ENCODE measurements at regions of chr15 and their contacts with region 1.

Region 1: DNA sequence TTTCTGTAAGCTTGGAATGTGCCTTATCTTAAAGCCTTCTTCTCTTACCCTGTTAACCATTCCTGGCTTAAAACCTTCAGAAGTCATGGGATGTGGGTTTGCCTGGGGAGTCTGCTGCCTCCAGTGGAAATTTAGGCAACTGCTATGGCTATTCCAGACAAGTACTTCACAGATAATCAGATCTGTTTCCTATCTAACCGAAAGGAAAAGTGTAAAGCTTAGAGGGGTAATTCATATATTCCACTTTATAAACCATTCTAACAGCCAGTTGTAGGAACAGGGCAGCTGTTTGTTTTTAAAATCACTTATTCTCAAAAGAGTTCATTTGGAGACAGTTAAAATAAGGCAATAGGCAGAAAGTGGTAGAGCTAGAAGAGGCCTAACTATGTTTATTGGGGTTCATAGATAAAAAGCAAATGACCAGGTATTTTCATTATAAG is 219.9 kb downstream of the TCF12 start:
- DNase-seq: peak; percentile 60 to 72
- H3K4me3 ChIP-seq: no peak overlapping the region
- H3K4me3 Mint-ChIP-seq: no peak overlapping the region
- H3K27ac Mint-ChIP-seq: no peak overlapping the region
- H3K4me1 ChIP-seq: no peaks in the 10 kb centered on the region
- H3K4me1 Mint-ChIP-seq: peaks cover 2% of the 10 kb centered on the region
- H3K27me3 ChIP-seq: no peaks in the 10 kb centered on the region
- H3K27me3 Mint-ChIP-seq: no peaks in the 10 kb centered on the region
- CTCF ChIP-seq: peak; percentile 84 to 87

Region 2: GRCh38 chr15:56918046-56918938 is 220.1 kb before region 1 on chr15 and contains the start of gene TCF12:
- CTCF ChIA-PET with region 1: interaction called, 3 read pairs
- POLR2A ChIA-PET with region 1: interaction called, 3 read pairs
- intact Hi-C with region 1: loop called (anchors 2 kb)
- DNase-seq: peak; percentile 96 to 98
- H3K4me3 ChIP-seq: peak within 1 kb of the TSS; percentile 92
- H3K4me3 Mint-ChIP-seq: peak within 1 kb of the TSS; percentile 99
- H3K27ac Mint-ChIP-seq: peak within 1 kb of the TSS; percentile 97
- H3K4me1 ChIP-seq: peaks cover 19% of the 10 kb centered on the region
- H3K4me1 Mint-ChIP-seq: peaks cover 3% of the 10 kb centered on the region
- H3K27me3 ChIP-seq: no peaks in the 10 kb centered on the region
- H3K27me3 Mint-ChIP-seq: no peaks in the 10 kb centered on the region
- CTCF ChIP-seq: peak; percentile 37 to 45
- total RNA-seq, gene TCF12: 64.4 and 68.8 TPM in 2 replicates

Region 3: DNA sequence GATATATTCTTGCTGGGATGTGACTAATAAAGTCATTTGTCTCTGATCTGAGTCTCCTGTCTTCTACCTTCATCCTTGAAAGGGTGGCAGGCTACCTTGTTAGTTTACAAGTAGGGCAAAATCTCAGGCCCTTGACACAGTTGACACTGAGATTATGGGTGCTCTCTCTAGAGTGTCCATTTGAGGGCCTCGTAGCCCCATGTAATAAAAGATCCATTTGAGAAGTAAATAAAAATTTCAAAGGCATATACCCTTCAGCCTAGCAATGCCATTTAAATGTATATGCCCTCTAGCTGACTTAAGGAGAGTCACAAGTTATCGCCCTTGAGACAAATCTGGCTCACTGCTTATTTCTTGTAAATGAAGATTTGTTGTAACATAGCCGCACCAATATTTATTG is 121.3 kb before region 1 on chr15:
- CTCF ChIA-PET with region 1: interaction called, 3 read pairs
- POLR2A ChIA-PET with region 1: no interaction called
- intact Hi-C with region 1: loop called (anchors 2 kb)
- DNase-seq: peak in 1 of 2 experiments; percentile 4
- H3K4me3 ChIP-seq: no peak overlapping the region
- H3K4me3 Mint-ChIP-seq: no peak overlapping the region
- H3K27ac Mint-ChIP-seq: no peak overlapping the region
- H3K4me1 ChIP-seq: peaks cover 26% of the 10 kb centered on the region
- H3K4me1 Mint-ChIP-seq: peaks cover 6% of the 10 kb centered on the region
- H3K27me3 ChIP-seq: no peaks in the 10 kb centered on the region
- H3K27me3 Mint-ChIP-seq: no peaks in the 10 kb centered on the region
- CTCF ChIP-seq: no peak

Region 4: GRCh38 chr15:57111002-57111401 is 27.4 kb before region 1 on chr15:
- CTCF ChIA-PET with region 1: no interaction called
- POLR2A ChIA-PET with region 1: no interaction called
- intact Hi-C with region 1: loop called (anchors 2 kb)
- DNase-seq: peak in 1 of 2 experiments; percentile 5
- H3K4me3 ChIP-seq: no peak overlapping the region
- H3K4me3 Mint-ChIP-seq: no peak overlapping the region
- H3K27ac Mint-ChIP-seq: no peak overlapping the region
- H3K4me1 ChIP-seq: no peaks in the 10 kb centered on the region
- H3K4me1 Mint-ChIP-seq: no peaks in the 10 kb centered on the region
- H3K27me3 ChIP-seq: no peaks in the 10 kb centered on the region
- H3K27me3 Mint-ChIP-seq: no peaks in the 10 kb centered on the region
- CTCF ChIP-seq: peak in 1 of 2 experiments; percentile 17